Endothelial cell of umbilical vein (primary cell): ENCODE measurements at regions of chr3 and their contacts with region 1.

Region 1: GRCh38 chr3:146640955-146641867 is 36.1 kb upstream of the PLSCR5 start:
- DNase-seq: peak; percentile 69
- H3K4me3 ChIP-seq: no peak overlapping the region
- H3K27ac ChIP-seq: no peak overlapping the region
- H3K4me1 ChIP-seq: no peaks in the 10 kb centered on the region
- H3K27me3 ChIP-seq: no peaks in the 10 kb centered on the region
- CTCF ChIP-seq: peak; percentile 38
- POLR2A ChIP-seq: no peak

Region 2: GRCh38 chr3:145776782-145777408 is 864.3 kb before region 1 on chr3:
- CTCF ChIA-PET with region 1: interaction called, 12 read pairs
- POLR2A ChIA-PET with region 1: no interaction called
- dilution Hi-C with region 1: no loop called
- intact Hi-C with region 1: loop called (anchors 5 kb)
- DNase-seq: peak; percentile 80
- H3K4me3 ChIP-seq: no peak overlapping the region
- H3K27ac ChIP-seq: no peak overlapping the region
- H3K4me1 ChIP-seq: no peaks in the 10 kb centered on the region
- H3K27me3 ChIP-seq: peaks cover 0 to 3% of the 10 kb centered on the region in 2 experiments
- CTCF ChIP-seq: peak; percentile 53 to 62
- POLR2A ChIP-seq: no peak

Region 3: DNA sequence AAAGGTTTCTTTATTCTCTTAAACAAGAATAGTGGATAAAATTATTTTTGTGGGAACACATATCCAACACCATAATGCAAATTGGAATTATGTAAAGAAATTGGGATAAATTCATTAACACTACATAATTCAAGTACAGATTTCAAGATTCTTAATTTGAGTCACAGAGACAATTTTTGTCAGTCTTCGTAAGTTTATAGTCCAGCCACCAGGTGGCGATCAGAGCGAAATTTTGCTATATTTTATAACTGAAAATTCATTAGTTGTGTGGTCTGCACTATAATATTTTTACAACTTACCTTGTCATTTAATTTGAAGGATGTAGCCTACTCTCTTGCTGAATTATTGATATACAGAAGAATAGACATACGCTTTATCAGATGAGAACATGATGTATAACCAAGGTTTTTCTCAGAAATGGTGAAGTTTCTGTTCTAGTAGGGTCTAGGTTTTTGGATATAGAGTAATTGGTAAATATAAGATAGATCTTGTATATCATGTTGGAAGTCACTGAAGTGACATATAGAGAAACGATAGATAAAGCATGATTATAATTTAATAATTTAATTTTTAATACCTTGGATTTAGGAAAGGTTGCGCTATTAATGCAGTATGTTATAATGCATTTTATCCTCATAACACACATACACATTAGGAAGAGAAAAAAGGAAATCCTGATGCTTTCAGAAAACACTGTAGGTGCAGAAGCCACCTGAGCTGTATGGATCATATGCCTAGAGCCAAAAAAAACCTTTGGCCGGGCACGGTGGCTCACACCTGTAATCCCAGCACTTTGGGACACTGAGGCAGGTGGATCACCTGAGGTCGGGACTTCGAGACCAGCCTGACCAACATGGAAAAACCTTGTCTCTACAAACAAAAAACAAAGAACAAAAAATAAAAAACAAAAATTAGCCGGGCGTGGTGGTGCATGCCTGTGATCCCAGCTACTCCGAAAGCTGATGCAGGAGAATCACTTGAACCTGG is 422.0 kb before region 1 on chr3:
- CTCF ChIA-PET with region 1: no interaction called
- POLR2A ChIA-PET with region 1: no interaction called
- dilution Hi-C with region 1: no loop called
- intact Hi-C with region 1: loop called (anchors 2 kb)
- DNase-seq: peak; percentile 71
- H3K4me3 ChIP-seq: no peak overlapping the region
- H3K27ac ChIP-seq: peak overlapping the region; percentile 10
- H3K4me1 ChIP-seq: peaks cover 50% of the 10 kb centered on the region
- H3K27me3 ChIP-seq: no peaks in the 10 kb centered on the region
- CTCF ChIP-seq: peak; percentile 37 to 39
- POLR2A ChIP-seq: no peak

Region 4: GRCh38 chr3:146577662-146578061 is 63.5 kb before region 1 on chr3:
- CTCF ChIA-PET with region 1: interaction called, 10 read pairs
- POLR2A ChIA-PET with region 1: no interaction called
- dilution Hi-C with region 1: no loop called
- intact Hi-C with region 1: no loop called
- DNase-seq: peak; percentile 76
- H3K4me3 ChIP-seq: no peak overlapping the region
- H3K27ac ChIP-seq: no peak overlapping the region
- H3K4me1 ChIP-seq: no peaks in the 10 kb centered on the region
- H3K27me3 ChIP-seq: no peaks in the 10 kb centered on the region
- CTCF ChIP-seq: peak in 1 of 2 donors; percentile 8
- POLR2A ChIP-seq: no peak

Region 5: DNA sequence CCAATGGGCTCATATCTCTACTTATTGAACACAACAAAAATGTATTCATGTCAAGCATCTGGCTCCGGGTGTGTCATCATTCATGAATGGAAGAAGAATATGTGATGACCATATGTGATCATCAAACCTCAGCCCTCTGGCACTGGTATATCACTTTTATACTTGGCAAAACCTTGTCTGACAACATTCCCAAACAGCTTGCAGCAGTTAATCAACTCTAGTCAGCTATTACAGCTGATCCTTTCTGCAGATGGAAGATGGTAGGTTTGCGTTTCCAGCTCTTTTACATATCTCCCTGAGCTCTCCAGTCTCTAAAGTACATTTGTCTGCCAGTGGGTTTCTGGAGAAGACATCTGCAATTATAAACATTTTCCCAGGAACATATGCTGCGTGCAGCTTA is 42.7 kb before region 1 on chr3:
- CTCF ChIA-PET with region 1: interaction called, 122 read pairs
- POLR2A ChIA-PET with region 1: no interaction called
- dilution Hi-C with region 1: no loop called
- intact Hi-C with region 1: no loop called
- DNase-seq: no peak
- H3K4me3 ChIP-seq: no peak overlapping the region
- H3K27ac ChIP-seq: no peak overlapping the region
- H3K4me1 ChIP-seq: no peaks in the 10 kb centered on the region
- H3K27me3 ChIP-seq: no peaks in the 10 kb centered on the region
- CTCF ChIP-seq: no peak
- POLR2A ChIP-seq: no peak

Region 6: DNA sequence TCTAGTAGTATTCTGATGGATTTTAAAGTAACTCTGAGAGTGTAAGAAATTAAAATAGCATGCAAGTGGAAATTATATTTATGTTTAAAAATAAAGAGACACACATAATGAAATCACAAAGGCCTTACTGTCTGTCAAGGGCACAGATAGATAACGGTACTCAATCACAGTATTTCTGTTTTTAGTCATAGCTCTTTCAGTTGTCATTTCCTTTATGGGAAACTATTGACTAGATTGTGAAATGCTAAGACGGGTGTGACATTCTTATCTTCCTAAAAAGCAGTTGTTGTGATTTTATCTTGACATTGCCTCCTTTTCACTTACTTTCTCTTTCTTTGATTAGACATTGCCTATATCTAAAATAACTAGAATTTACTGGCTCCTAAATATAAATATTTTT is 64.0 kb after region 1 on chr3:
- CTCF ChIA-PET with region 1: no interaction called
- POLR2A ChIA-PET with region 1: no interaction called
- dilution Hi-C with region 1: no loop called
- intact Hi-C with region 1: no loop called
- DNase-seq: no peak
- H3K4me3 ChIP-seq: no peak overlapping the region
- H3K27ac ChIP-seq: no peak overlapping the region
- H3K4me1 ChIP-seq: no peaks in the 10 kb centered on the region
- H3K27me3 ChIP-seq: no peaks in the 10 kb centered on the region
- CTCF ChIP-seq: no peak
- POLR2A ChIP-seq: no peak

Region 7: DNA sequence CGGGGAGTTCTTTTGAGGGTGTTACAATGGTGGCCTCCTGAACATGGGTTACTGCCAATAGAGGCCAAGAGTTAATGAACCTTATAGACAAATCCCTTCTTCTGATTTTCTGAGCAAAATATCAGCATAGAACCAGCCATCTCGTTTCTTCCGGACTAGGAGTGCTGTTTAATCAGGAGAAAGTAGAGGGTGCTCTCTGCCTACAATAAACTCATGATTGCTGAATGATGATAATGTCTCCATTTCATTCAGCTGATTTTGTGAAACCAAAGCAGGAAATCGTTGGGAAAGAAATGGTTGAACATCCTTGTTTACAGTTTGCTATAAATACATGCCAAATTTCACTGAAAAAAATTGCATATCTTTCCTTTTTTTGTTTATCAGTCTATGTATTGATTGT is 106.7 kb after region 1 on chr3:
- CTCF ChIA-PET with region 1: interaction called, 4 read pairs
- POLR2A ChIA-PET with region 1: no interaction called
- dilution Hi-C with region 1: no loop called
- intact Hi-C with region 1: loop called (anchors 2 kb)
- DNase-seq: peak; percentile 35
- H3K4me3 ChIP-seq: no peak overlapping the region
- H3K27ac ChIP-seq: peak overlapping the region; percentile 20
- H3K4me1 ChIP-seq: peaks cover 28% of the 10 kb centered on the region
- H3K27me3 ChIP-seq: no peaks in the 10 kb centered on the region
- CTCF ChIP-seq: peak in 1 of 2 donors; percentile 6
- POLR2A ChIP-seq: no peak

Region 8: GRCh38 chr3:147119989-147120388 is 478.8 kb after region 1 on chr3:
- CTCF ChIA-PET with region 1: interaction called, 4 read pairs
- POLR2A ChIA-PET with region 1: no interaction called
- dilution Hi-C with region 1: no loop called
- intact Hi-C with region 1: loop called (anchors 5 kb)
- DNase-seq: peak; percentile 29
- H3K4me3 ChIP-seq: no peak overlapping the region
- H3K27ac ChIP-seq: no peak overlapping the region
- H3K4me1 ChIP-seq: no peaks in the 10 kb centered on the region
- H3K27me3 ChIP-seq: peaks cover 0 to 4% of the 10 kb centered on the region in 2 experiments
- CTCF ChIP-seq: peak in 1 of 2 donors; percentile 33
- POLR2A ChIP-seq: no peak